SK-N-SH (cell line): ENCODE measurements at regions of chr7 and their contacts with region 1.

Region 1: GRCh38 chr7:19754521-19755116 is 18.8 kb downstream of the TMEM196 start:
- DNase-seq: peak; percentile 12
- H3K4me3 ChIP-seq: no peak overlapping the region; a peak in 1 of 4 replicates
- H3K27ac ChIP-seq: no peak overlapping the region
- H3K4me1 ChIP-seq: no peaks in the 10 kb centered on the region
- H3K27me3 ChIP-seq: peaks cover 5% of the 10 kb centered on the region; the same call in 1 of the 2 replicates
- CTCF ChIP-seq: peak; percentile 95
- EP300 ChIP-seq: no peak
- RAD21 ChIP-seq: peak; percentile 71

Region 2: DNA sequence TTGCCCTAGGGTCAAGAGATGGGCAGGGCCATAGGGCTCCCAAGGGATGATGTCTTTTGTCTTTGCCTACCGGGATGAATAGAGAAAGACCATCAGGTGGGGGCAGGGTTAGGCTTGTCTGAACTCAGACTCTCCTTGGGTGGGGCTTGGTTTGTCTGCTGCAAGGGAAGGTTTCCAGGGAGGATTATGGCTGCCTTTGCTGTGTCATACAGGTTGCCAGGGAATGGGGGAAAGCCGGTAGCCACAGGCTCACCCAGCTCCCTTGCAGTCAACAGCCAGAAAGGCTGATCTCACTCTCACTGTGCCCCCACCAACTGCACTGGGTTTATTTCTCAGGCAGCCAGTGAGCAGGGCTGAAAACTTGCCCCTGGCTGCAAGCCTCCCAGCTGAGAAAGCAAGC is 299.0 kb before region 1 on chr7:
- CTCF ChIA-PET with region 1: no interaction called
- POLR2A ChIA-PET with region 1: no interaction called
- DNase-seq: no peak
- H3K4me3 ChIP-seq: no peak overlapping the region
- H3K27ac ChIP-seq: no peak overlapping the region
- H3K4me1 ChIP-seq: no peaks in the 10 kb centered on the region
- H3K27me3 ChIP-seq: no peaks in the 10 kb centered on the region
- CTCF ChIP-seq: no peak
- EP300 ChIP-seq: no peak
- RAD21 ChIP-seq: no peak

Region 3: DNA sequence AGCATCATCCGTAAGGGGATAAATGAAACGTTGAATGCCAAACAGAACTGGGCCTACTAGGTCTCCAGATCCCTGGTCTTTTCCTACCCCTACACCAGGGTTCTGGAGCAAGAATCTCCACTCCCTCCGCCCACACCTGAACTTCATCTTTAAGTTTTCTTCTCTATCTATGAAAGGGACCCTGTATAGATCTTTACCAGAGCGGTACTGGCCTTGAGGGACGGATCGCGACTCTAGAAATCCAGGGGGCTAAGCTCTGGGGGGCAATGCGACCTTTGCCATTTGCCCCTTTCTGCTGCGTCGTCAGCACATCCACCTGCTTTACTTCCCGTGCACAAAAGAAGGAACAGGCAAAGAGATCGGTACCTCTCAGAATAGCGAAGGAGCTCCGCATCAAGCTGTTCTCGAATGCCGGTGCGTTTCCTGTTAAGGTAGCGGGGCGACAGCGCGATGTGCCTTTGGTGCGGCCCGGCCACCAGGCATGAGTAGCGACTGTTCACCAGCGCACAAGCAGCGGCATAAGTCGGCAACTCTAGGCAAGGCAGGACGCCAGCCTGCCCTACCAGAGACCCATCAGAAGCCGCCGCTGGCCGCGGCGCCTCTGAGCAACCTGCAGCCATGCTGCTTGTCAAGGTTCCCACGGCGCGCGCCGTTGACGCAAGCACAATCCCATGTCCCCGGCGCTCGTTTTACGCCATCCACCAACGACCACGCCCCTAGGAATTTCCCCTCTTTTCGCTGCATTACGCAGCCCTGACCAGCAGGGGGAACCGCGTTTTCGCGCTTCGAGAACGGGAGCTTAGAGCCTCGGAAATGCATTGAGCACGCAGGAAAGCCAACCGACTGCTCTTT is 46.0 kb before region 1 on chr7 and contains the start of gene POLR1F:
- CTCF ChIA-PET with region 1: interaction called, 10 read pairs
- POLR2A ChIA-PET with region 1: no interaction called
- DNase-seq: peak; percentile 93
- H3K4me3 ChIP-seq: peak within 1 kb of the TSS; percentile 82 to 100
- H3K27ac ChIP-seq: peak within 1 kb of the TSS; percentile 38 to 47; a peak in 3 of 4 replicates
- H3K4me1 ChIP-seq: peaks cover 0 to 16% of the 10 kb centered on the region in 2 experiments; a peak in 2 of 4 replicates
- H3K27me3 ChIP-seq: no peaks in the 10 kb centered on the region
- CTCF ChIP-seq: peak; percentile 97
- EP300 ChIP-seq: no peak
- RAD21 ChIP-seq: peak; percentile 69
- polyA plus RNA-seq, gene POLR1F: 5.1 and 8.1 TPM in 2 replicates

Region 4: DNA sequence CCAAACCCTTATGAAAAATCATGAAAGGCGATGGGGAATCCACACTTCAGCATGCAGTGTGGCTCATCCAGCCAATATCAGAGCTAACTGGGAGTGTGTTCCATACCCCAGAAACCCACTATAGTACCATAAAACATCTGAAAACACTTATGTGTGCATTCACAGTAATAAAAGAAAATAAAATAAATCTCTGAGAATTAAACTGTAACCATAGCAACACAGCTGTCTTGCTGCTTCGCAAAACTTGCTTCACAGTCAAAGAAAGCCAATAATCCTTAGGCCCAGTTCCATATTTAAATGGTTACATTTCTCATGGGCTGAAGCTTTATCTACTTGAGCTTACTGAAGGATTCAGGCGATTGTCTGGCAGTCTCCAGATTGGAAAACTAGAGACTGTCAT is 25.9 kb before region 1 on chr7:
- CTCF ChIA-PET with region 1: interaction called, 13 read pairs
- POLR2A ChIA-PET with region 1: no interaction called
- DNase-seq: no peak
- H3K4me3 ChIP-seq: no peak overlapping the region
- H3K27ac ChIP-seq: no peak overlapping the region
- H3K4me1 ChIP-seq: no peaks in the 10 kb centered on the region
- H3K27me3 ChIP-seq: peaks cover 4% of the 10 kb centered on the region; the same call in 1 of the 2 replicates
- CTCF ChIP-seq: no peak
- EP300 ChIP-seq: no peak
- RAD21 ChIP-seq: no peak

Region 5: GRCh38 chr7:19772841-19773760 is 18.5 kb after region 1 on chr7 and contains the start of gene TMEM196:
- CTCF ChIA-PET with region 1: interaction called, 14 read pairs
- POLR2A ChIA-PET with region 1: no interaction called
- DNase-seq: peak; percentile 17
- H3K4me3 ChIP-seq: no peak within 1 kb of the TSS; a peak in 1 of 4 replicates
- H3K27ac ChIP-seq: no peak within 1 kb of the TSS
- H3K4me1 ChIP-seq: no peaks in the 10 kb centered on the region; a peak in 1 of 4 replicates
- H3K27me3 ChIP-seq: peaks cover 16% of the 10 kb centered on the region; the same call in 1 of the 2 replicates
- CTCF ChIP-seq: no peak
- EP300 ChIP-seq: no peak
- RAD21 ChIP-seq: no peak
- polyA plus RNA-seq, gene TMEM196: not detected in 2 replicates

Region 6: GRCh38 chr7:20172736-20173334 is 418.2 kb after region 1 on chr7:
- CTCF ChIA-PET with region 1: interaction called, 19 read pairs
- POLR2A ChIA-PET with region 1: no interaction called
- DNase-seq: peak; percentile 66
- H3K4me3 ChIP-seq: no peak overlapping the region
- H3K27ac ChIP-seq: no peak overlapping the region
- H3K4me1 ChIP-seq: no peaks in the 10 kb centered on the region
- H3K27me3 ChIP-seq: no peaks in the 10 kb centered on the region
- CTCF ChIP-seq: peak; percentile 67
- EP300 ChIP-seq: no peak
- RAD21 ChIP-seq: peak; percentile 78